Activated CD4-positive, alpha-beta T cell treated with anti-CD3 and anti-CD28 coated beads for 36 hours (primary cell): ENCODE measurements at regions of chr5 and their contacts with region 1.

Region 1: DNA sequence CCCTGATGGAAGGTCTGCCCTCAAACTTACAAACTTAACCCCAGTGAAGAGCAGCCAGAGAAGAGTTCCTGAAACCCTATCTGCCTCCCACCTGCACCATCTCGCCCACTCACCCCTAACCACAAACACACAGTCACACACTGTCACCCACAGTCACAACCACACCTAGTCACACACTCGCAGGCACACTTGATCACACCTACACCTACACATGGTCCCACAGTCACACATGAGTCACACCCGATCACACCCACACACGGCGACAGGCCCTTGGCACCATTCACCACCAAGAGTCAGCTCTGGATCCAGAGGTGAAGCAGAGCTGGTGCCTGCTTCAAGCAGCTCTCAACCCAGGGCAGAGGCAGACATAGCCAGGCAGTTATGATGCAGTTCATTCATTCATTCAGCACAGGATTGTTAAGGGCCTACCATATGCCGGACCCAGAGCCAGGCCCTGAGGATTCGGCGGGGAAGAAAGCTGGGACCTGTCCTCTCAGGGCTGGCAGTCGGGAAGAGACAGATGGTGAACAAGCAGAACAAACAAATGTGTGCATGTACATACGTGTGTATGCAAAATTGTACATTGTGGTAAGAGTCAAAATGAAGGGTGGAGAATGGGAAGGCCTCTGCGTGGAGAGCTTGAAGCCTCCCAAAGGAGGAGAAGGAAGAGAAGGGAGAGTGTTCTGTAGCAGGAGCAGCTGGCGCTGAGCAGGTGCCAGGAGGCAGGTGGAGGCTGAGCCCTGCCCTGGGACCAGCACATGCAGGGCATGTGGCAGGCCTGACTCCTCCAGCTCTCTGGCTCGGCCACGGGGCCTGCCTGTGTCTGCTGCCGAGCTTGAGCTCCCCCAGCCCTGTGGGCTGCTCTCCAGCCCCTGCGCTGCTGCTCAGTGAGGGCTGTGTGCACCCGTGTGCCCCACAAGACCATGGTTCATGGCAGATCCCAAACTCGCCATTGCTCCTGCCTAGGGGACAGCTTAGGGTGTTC is 6.4 kb downstream of the TSPAN17 start:
- DNase-seq: peak; percentile 89
- ATAC-seq: peak; percentile 82
- H3K4me3 Mint-ChIP-seq: peak overlapping the region; percentile 1
- H3K27ac Mint-ChIP-seq: peak overlapping the region; percentile 55
- H3K4me1 Mint-ChIP-seq: peaks cover 54% of the 10 kb centered on the region
- H3K27me3 Mint-ChIP-seq: no peaks in the 10 kb centered on the region

Region 2: GRCh38 chr5:176400382-176401156 is 253.1 kb before region 1 on chr5:
- CTCF ChIA-PET with region 1: no interaction called
- POLR2A ChIA-PET with region 1: no interaction called
- intact Hi-C with region 1: no loop called
- DNase-seq: no peak
- ATAC-seq: no peak
- H3K4me3 Mint-ChIP-seq: no peak overlapping the region
- H3K27ac Mint-ChIP-seq: no peak overlapping the region
- H3K4me1 Mint-ChIP-seq: no peaks in the 10 kb centered on the region
- H3K27me3 Mint-ChIP-seq: no peaks in the 10 kb centered on the region

Region 3: GRCh38 chr5:176596689-176597416 is 56.8 kb before region 1 on chr5:
- CTCF ChIA-PET with region 1: no interaction called
- POLR2A ChIA-PET with region 1: no interaction called
- intact Hi-C with region 1: no loop called
- DNase-seq: peak; percentile 81
- ATAC-seq: peak; percentile 87
- H3K4me3 Mint-ChIP-seq: peak overlapping the region; percentile 48
- H3K27ac Mint-ChIP-seq: peak overlapping the region; percentile 68
- H3K4me1 Mint-ChIP-seq: peaks cover 8% of the 10 kb centered on the region
- H3K27me3 Mint-ChIP-seq: peaks cover 2% of the 10 kb centered on the region

Region 4: DNA sequence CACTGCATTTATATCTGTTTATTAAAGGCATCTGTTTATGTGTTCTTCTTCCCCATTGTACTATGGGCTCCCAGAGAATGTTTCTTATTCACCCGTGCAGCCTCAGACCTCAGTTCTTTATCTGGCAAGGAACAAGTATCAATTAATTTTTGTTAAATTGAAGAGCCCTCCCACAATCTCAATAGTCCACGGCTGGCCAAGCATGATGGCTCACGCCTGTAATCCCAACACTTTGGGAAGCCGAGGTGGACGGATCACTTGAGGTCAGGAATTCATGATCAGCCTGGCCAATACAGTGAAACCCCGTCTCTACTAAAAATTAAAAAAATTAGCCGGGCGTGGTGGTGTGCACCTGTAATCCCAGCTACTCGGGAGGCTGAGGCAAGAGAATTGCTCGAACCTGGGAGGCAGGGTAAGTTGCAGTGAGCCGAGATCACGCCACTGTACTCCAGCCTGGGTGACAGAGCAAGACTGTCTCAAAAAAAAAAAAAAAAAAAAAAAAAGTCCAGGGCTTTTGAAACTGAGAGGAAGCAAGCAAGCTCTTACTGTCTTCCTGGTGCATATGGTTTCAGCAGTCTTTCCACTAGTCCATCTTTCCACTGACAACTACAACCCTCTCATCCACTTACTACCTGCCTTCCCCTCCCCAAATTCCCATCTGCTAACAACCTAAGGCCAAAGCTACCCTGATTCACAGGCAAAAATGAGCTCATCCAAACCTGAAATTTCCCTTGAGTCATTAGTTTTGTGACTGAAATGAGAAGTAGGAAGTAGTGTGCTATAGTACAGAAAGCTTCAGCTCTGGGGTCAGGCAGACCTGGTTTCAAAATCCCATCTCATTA is 247.8 kb after region 1 on chr5:
- CTCF ChIA-PET with region 1: no interaction called
- POLR2A ChIA-PET with region 1: no interaction called
- intact Hi-C with region 1: loop called in 1 of 2 experiments (anchors 5 kb)
- DNase-seq: peak; percentile 37
- ATAC-seq: peak; percentile 94
- H3K4me3 Mint-ChIP-seq: peak overlapping the region; percentile 13
- H3K27ac Mint-ChIP-seq: peak overlapping the region; percentile 83
- H3K4me1 Mint-ChIP-seq: peaks cover 30% of the 10 kb centered on the region
- H3K27me3 Mint-ChIP-seq: no peaks in the 10 kb centered on the region

Region 5: GRCh38 chr5:177509381-177509951 is 855.8 kb after region 1 on chr5 and contains the start of gene DOK3:
- CTCF ChIA-PET with region 1: no interaction called
- POLR2A ChIA-PET with region 1: no interaction called
- intact Hi-C with region 1: no loop called
- DNase-seq: peak; percentile 43
- ATAC-seq: peak; percentile 20
- H3K4me3 Mint-ChIP-seq: no peak within 1 kb of the TSS
- H3K27ac Mint-ChIP-seq: no peak within 1 kb of the TSS
- H3K4me1 Mint-ChIP-seq: peaks cover 10% of the 10 kb centered on the region
- H3K27me3 Mint-ChIP-seq: no peaks in the 10 kb centered on the region
- total RNA-seq, gene DOK3: 4.2 to 4.8 TPM